ENCODE measurements at regions of chr15 and their contacts with region 1.

Region 1: GRCh38 chr15:51681303-51681963 is at the start of gene SCG3:
- DNase-seq: peak; percentile 76 to 81
- ATAC-seq: peak; percentile 84 to 93 (median 90)
- H3K4me3 ChIP-seq: peak within 1 kb of the TSS in 4 of 10 donors; percentile 8 to 31 (median 16)
- H3K27ac ChIP-seq: no peak within 1 kb of the TSS
- H3K4me1 ChIP-seq: peaks cover 0 to 9% (median 5%) of the 10 kb centered on the region in 9 donors
- H3K27me3 ChIP-seq: peaks cover 0 to 72% (median 24%) of the 10 kb centered on the region in 7 donors
- CTCF ChIP-seq: no peak
- total RNA-seq, gene SCG3: 0.13 TPM in 1 of 10 donors, not detected in the others

Region 2: GRCh38 chr15:51737280-51738017 is 56.0 kb after region 1 on chr15 and contains the start of gene LYSMD2:
- intact Hi-C with region 1: loop called in 1 of 10 experiments (anchors 5 kb)
- DNase-seq: peak; percentile 86 to 87
- ATAC-seq: peak; percentile 92 to 98 (median 94)
- H3K4me3 ChIP-seq: peak within 1 kb of the TSS; percentile 66 to 93 (median 78)
- H3K27ac ChIP-seq: peak within 1 kb of the TSS; percentile 71 to 92 (median 88)
- H3K4me1 ChIP-seq: peaks cover 4 to 44% (median 33%) of the 10 kb centered on the region in 9 donors
- H3K27me3 ChIP-seq: no peaks in the 10 kb centered on the region
- CTCF ChIP-seq: no peak
- total RNA-seq, gene LYSMD2: 1.7 to 8.6 (median 3.9) TPM